ENCODE measurements at regions of chr2 and their contacts with region 1.

Region 1: DNA sequence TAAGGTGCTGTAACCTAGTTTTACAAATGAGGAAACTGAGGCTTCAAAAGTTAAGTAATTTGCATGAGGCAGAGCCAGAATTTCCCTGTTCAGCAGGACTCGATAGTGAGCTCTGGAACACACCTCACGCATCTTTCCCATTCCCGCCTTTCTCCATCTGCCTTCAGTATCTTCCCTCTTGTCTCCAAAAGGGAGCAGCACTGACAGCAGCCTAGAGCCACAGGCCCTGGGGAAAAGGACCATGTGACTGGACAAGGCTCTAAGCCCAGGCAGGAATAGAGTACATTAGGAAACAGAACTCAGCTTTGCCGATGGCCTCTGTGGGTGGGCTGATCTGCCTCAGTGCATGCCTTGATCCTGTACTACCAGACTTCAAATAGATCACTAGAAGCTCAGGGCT is 21.5 kb downstream of the GPR155 start:
- DNase-seq: no peak
- ATAC-seq: no peak
- H3K4me3 Mint-ChIP-seq: no peak overlapping the region
- H3K27ac Mint-ChIP-seq: no peak overlapping the region
- H3K4me1 Mint-ChIP-seq: no peaks in the 10 kb centered on the region
- H3K27me3 Mint-ChIP-seq: no peaks in the 10 kb centered on the region
- CTCF ChIP-seq: no peak

Region 2: DNA sequence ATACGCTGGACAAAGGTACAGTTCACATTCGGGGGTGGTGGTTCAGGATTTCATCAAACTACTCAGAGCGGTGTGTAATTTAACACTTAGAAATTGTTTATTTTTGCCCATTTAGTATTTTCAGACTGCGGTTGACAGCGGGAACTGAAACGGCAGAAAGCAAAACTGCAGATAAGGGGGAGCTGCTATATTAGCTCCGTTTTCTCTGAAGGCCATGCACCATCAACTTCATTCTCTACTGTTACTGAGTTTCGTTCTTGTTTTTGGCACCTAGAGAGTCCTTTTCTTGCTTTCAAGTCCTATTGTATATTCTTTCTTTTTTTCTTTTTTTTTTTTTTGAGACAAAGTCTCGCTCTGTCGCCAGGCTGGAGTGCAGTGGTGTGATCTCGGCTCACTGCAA is 378.6 kb before region 1 on chr2:
- CTCF ChIA-PET with region 1: no interaction called
- POLR2A ChIA-PET with region 1: no interaction called
- intact Hi-C with region 1: no loop called
- DNase-seq: no peak
- ATAC-seq: no peak
- H3K4me3 Mint-ChIP-seq: no peak overlapping the region
- H3K27ac Mint-ChIP-seq: no peak overlapping the region
- H3K4me1 Mint-ChIP-seq: no peaks in the 10 kb centered on the region
- H3K27me3 Mint-ChIP-seq: no peaks in the 10 kb centered on the region
- CTCF ChIP-seq: no peak

Region 3: GRCh38 chr2:174499371-174499770 is 34.0 kb after region 1 on chr2:
- CTCF ChIA-PET with region 1: interaction called, 10 read pairs
- POLR2A ChIA-PET with region 1: no interaction called
- intact Hi-C with region 1: no loop called
- DNase-seq: no peak
- ATAC-seq: no peak
- H3K4me3 Mint-ChIP-seq: no peak overlapping the region
- H3K27ac Mint-ChIP-seq: no peak overlapping the region
- H3K4me1 Mint-ChIP-seq: peaks cover 4% of the 10 kb centered on the region
- H3K27me3 Mint-ChIP-seq: no peaks in the 10 kb centered on the region
- CTCF ChIP-seq: no peak

Region 4: GRCh38 chr2:174553811-174554493 is 88.6 kb after region 1 on chr2:
- CTCF ChIA-PET with region 1: interaction called, 16 read pairs
- POLR2A ChIA-PET with region 1: no interaction called
- intact Hi-C with region 1: loop called (anchors 2 kb)
- DNase-seq: no peak
- ATAC-seq: peak; percentile 87
- H3K4me3 Mint-ChIP-seq: peak overlapping the region; percentile 40
- H3K27ac Mint-ChIP-seq: peak overlapping the region; percentile 88
- H3K4me1 Mint-ChIP-seq: peaks cover 33% of the 10 kb centered on the region
- H3K27me3 Mint-ChIP-seq: no peaks in the 10 kb centered on the region
- CTCF ChIP-seq: no peak

Region 5: DNA sequence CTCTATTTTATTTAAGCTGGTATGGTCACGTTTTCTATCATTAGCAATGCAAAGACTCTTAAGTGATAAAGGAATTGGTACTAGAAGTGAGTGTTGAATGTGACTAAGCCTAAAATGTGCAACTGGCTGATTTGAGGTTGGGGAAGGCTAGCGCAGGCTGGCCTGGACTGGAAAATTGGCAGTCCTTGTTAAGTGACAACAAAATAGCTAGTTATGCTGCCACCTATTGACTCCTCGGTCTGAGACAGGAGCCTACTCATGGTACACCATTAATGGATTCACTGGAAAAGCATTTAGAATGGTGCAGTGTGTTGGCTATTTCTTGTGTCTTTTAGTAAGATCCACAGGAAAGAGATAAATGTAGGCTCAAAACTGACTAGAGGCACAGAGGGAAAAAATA is 138.0 kb after region 1 on chr2:
- CTCF ChIA-PET with region 1: interaction called, 40 read pairs
- POLR2A ChIA-PET with region 1: interaction called, 3 read pairs
- intact Hi-C with region 1: loop called (anchors 1 kb)
- DNase-seq: no peak
- ATAC-seq: peak; percentile 25
- H3K4me3 Mint-ChIP-seq: no peak overlapping the region
- H3K27ac Mint-ChIP-seq: peak overlapping the region; percentile 68
- H3K4me1 Mint-ChIP-seq: peaks cover 82% of the 10 kb centered on the region
- H3K27me3 Mint-ChIP-seq: no peaks in the 10 kb centered on the region
- CTCF ChIP-seq: no peak

Region 6: DNA sequence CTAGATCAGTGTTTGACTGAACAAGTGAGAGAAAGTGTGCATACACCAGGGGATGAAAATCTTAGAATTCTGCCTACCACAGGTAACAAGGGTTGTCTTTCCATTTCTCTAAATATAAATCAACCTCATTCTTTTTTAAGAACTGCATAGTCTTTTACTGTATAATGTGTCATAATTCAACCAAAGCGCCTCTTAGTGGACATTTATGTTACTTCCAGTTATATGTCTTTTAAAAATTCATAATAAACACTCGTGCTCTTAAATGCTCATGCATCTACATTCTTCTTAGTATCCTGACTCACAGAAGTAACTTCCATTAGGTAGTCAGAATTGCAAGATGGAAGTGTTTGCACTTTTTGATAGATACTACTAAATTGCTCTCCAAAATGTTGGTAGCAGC is 222.8 kb after region 1 on chr2:
- CTCF ChIA-PET with region 1: interaction called, 158 read pairs
- POLR2A ChIA-PET with region 1: interaction called, 6 read pairs
- intact Hi-C with region 1: loop called (anchors 1 kb)
- DNase-seq: no peak
- ATAC-seq: peak; percentile 41
- H3K4me3 Mint-ChIP-seq: no peak overlapping the region
- H3K27ac Mint-ChIP-seq: no peak overlapping the region
- H3K4me1 Mint-ChIP-seq: peaks cover 11% of the 10 kb centered on the region
- H3K27me3 Mint-ChIP-seq: peaks cover 3% of the 10 kb centered on the region
- CTCF ChIP-seq: peak; percentile 55

Measured in activated B cell treated with CpG ODN at 0.5 μM for 24 hours (primary cell).